ENCODE measurements at regions of chr3 and their contacts with region 1.

Region 1: DNA sequence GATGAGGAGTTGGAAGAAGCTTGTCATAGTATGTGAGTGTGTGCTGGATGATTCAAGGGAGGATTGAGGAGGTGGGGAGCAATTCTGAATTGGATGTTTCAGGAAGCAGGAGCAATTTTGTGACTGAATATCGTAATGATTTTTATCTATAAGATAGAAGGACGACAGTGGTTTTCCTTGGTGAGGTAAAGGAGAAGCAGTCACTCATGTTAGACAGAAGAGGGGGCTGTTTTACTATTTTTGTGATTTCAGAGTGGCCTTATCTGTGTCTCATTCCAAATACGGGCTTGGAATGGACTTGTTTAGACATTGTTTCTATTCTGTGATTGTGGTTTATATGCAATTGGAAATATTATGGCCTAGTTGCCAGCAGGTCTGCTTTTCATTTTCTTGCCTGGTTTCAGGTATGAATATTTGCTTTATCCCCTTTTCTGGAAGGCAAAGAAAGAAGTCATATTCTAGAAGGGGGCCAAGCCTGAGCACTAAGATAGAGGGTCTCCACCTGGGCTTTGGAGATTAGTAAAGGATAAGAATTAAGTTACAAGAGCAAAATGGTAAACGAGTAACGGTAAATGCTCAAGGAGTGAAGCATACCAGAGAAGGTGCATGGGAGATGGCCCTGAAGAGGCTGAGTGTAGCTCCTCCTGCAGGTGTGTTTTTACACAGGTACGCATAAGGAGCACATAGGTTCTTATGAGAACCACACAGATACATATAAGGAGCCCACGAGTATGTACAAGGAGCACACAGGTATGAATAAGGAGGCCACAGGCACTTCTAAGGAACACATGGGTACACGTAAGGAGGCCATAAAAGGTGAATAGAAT is 124.6 kb upstream of the KCNAB1 start:
- DNase-seq: no peak
- H3K4me3 ChIP-seq: no peak overlapping the region
- H3K27ac ChIP-seq: no peak overlapping the region
- H3K4me1 ChIP-seq: no peaks in the 10 kb centered on the region
- H3K27me3 ChIP-seq: no peaks in the 10 kb centered on the region
- CTCF ChIP-seq: peak in 2 of 3 donors; percentile 19 to 26
- EP300 ChIP-seq: no peak
- POLR2A ChIP-seq: no peak

Region 2: DNA sequence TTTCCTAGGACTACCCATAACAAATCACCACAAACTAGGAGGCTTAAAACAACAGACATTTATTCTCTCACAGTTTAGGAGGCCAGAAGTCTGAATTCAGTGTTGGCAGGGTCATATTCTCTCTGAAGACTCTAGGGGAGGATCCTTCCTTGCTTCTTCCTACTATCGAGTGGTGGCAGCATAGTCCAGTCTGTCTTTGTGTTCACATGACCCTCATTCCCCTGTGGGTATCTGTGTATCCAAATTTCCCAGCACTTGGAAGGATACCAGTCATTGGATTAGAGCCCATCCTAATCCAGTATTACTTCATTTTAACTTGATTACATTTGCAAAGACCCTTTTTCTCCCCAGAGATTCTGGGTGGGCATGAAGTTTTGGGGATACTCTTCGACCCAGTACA is 61.5 kb before region 1 on chr3:
- intact Hi-C with region 1: no loop called
- DNase-seq: no peak
- H3K4me3 ChIP-seq: no peak overlapping the region
- H3K27ac ChIP-seq: no peak overlapping the region
- H3K4me1 ChIP-seq: no peaks in the 10 kb centered on the region
- H3K27me3 ChIP-seq: no peaks in the 10 kb centered on the region
- CTCF ChIP-seq: no peak
- EP300 ChIP-seq: no peak
- POLR2A ChIP-seq: no peak

Region 3: GRCh38 chr3:157930000-157930780 is 1934.5 kb after region 1 on chr3:
- intact Hi-C with region 1: loop called in 1 of 4 experiments (anchors 5 kb)
- DNase-seq: no peak
- H3K4me3 ChIP-seq: no peak overlapping the region
- H3K27ac ChIP-seq: no peak overlapping the region
- H3K4me1 ChIP-seq: no peaks in the 10 kb centered on the region
- H3K27me3 ChIP-seq: no peaks in the 10 kb centered on the region
- CTCF ChIP-seq: no peak
- EP300 ChIP-seq: no peak
- POLR2A ChIP-seq: no peak